CD8-positive, alpha-beta T cell (primary cell): ENCODE measurements at regions of chr2 and their contacts with region 1.

Region 1: GRCh38 chr2:27071277-27071989 is at the start of gene OST4:
- DNase-seq: peak; percentile 74 to 94 (median 88)
- ATAC-seq: peak; percentile 88
- H3K4me3 ChIP-seq: peak within 1 kb of the TSS; percentile 84 to 93
- H3K4me3 Mint-ChIP-seq: peak within 1 kb of the TSS; percentile 98
- H3K27ac ChIP-seq: peak within 1 kb of the TSS; percentile 92 to 98
- H3K27ac Mint-ChIP-seq: peak within 1 kb of the TSS; percentile 98
- H3K4me1 ChIP-seq: peaks cover 46% of the 10 kb centered on the region
- H3K4me1 Mint-ChIP-seq: peaks cover 76% of the 10 kb centered on the region
- H3K27me3 ChIP-seq: no peaks in the 10 kb centered on the region
- H3K27me3 Mint-ChIP-seq: no peaks in the 10 kb centered on the region
- CTCF ChIP-seq: no peak
- total RNA-seq, gene OST4: 252 to 260 TPM

Region 2: GRCh38 chr2:26993768-26994167 is 77.7 kb before region 1 on chr2:
- CTCF ChIA-PET with region 1: no interaction called
- POLR2A ChIA-PET with region 1: no interaction called
- intact Hi-C with region 1: no loop called
- DNase-seq: no peak
- ATAC-seq: no peak
- H3K4me3 ChIP-seq: no peak overlapping the region
- H3K4me3 Mint-ChIP-seq: no peak overlapping the region
- H3K27ac ChIP-seq: no peak overlapping the region
- H3K27ac Mint-ChIP-seq: no peak overlapping the region
- H3K4me1 ChIP-seq: no peaks in the 10 kb centered on the region
- H3K4me1 Mint-ChIP-seq: no peaks in the 10 kb centered on the region
- H3K27me3 ChIP-seq: no peaks in the 10 kb centered on the region
- H3K27me3 Mint-ChIP-seq: peaks cover 7% of the 10 kb centered on the region
- CTCF ChIP-seq: no peak

Region 3: DNA sequence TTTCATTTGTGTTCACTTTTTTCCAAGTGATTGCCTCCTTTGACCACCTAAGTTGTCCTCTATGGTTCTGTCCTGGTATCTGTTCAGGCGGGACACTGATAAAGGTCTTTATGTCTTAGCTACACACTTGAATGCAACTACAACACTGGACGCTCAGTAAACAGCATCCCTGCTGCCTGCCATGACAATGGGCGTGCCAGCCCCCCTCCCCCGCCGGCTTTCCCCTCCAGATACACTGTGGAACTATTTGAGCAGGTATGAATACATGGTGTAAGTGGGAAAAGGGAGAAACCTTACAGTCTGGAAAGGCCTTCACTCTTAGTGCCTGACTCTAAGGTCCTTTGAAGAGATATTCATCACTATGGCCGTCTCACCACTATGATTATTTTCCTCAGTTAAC is 14.2 kb before region 1 on chr2:
- CTCF ChIA-PET with region 1: interaction called, 14 read pairs
- POLR2A ChIA-PET with region 1: interaction called, 103 read pairs
- intact Hi-C with region 1: no loop called
- DNase-seq: no peak
- ATAC-seq: no peak
- H3K4me3 ChIP-seq: no peak overlapping the region
- H3K4me3 Mint-ChIP-seq: no peak overlapping the region
- H3K27ac ChIP-seq: no peak overlapping the region
- H3K27ac Mint-ChIP-seq: no peak overlapping the region
- H3K4me1 ChIP-seq: peaks cover 1% of the 10 kb centered on the region
- H3K4me1 Mint-ChIP-seq: peaks cover 2% of the 10 kb centered on the region
- H3K27me3 ChIP-seq: no peaks in the 10 kb centered on the region
- H3K27me3 Mint-ChIP-seq: no peaks in the 10 kb centered on the region
- CTCF ChIP-seq: no peak